ENCODE measurements at regions of chr6 and their contacts with region 1.

Region 1: GRCh38 chr6:13908955-13909381 is 15.8 kb upstream of the RNF182 start:
- DNase-seq: peak in 1 of 2 donors; percentile 46
- ATAC-seq: no peak
- H3K4me3 ChIP-seq: no peak overlapping the region
- H3K27ac ChIP-seq: no peak overlapping the region
- H3K4me1 ChIP-seq: no peaks in the 10 kb centered on the region
- H3K27me3 ChIP-seq: no peaks in the 10 kb centered on the region

Region 2: DNA sequence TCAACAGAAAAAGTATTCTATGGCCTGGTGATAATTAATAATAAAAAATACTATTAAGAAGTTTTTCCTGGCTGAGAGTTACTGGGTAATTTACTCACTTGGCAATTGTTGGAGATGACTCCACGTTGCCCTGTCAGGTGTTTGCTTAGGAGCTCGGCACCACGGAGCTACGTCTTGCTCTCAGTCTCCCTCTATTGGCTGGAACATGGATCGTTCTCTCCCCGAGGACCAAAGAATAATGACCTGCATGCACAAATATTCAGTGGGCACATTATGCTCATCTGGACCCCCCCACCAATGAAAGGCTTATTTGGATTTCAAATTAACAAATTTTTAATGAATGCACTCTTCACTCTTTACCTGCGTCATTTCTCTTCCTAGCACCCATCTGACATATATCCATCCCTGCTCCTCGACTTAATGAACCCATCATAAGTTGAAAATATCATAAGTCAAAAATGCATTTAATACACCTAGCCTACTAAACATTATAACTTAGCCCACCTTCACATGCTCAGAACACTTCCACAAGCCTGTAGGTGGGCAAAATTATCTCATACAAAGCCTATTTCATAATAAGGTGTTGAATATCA is 137.6 kb after region 1 on chr6:
- intact Hi-C with region 1: loop called in 1 of 2 experiments (anchors 5 kb)
- DNase-seq: no peak
- ATAC-seq: no peak
- H3K4me3 ChIP-seq: no peak overlapping the region
- H3K27ac ChIP-seq: no peak overlapping the region
- H3K4me1 ChIP-seq: no peaks in the 10 kb centered on the region
- H3K27me3 ChIP-seq: no peaks in the 10 kb centered on the region

Region 3: DNA sequence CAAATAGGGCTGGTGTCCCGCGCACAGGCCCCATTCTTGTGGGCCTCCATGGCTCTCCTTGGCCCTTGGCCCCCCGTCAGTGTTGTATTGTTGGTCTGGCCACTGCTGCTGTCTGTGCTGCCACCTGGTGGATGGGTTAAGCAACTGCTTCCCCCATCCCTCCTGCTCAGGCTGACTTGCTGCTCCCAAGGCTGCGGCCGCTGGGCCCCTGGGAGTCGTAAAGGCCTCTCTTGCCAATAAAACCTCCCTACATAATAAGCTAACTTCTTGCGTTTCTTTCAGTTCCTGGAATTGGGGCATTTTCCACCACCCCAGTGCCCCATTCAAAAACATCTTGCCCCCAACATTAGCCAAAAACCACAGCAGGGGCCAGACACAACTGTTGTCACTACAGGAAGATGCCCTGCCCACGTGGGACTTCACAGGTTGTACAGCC is 235.7 kb after region 1 on chr6:
- intact Hi-C with region 1: loop called (anchors 2 to 5 kb)
- DNase-seq: peak; percentile 68 to 84
- ATAC-seq: peak; percentile 74
- H3K4me3 ChIP-seq: no peak overlapping the region
- H3K27ac ChIP-seq: no peak overlapping the region
- H3K4me1 ChIP-seq: no peaks in the 10 kb centered on the region
- H3K27me3 ChIP-seq: no peaks in the 10 kb centered on the region